ENCODE measurements at regions of chr3 and their contacts with region 1.

Region 1: DNA sequence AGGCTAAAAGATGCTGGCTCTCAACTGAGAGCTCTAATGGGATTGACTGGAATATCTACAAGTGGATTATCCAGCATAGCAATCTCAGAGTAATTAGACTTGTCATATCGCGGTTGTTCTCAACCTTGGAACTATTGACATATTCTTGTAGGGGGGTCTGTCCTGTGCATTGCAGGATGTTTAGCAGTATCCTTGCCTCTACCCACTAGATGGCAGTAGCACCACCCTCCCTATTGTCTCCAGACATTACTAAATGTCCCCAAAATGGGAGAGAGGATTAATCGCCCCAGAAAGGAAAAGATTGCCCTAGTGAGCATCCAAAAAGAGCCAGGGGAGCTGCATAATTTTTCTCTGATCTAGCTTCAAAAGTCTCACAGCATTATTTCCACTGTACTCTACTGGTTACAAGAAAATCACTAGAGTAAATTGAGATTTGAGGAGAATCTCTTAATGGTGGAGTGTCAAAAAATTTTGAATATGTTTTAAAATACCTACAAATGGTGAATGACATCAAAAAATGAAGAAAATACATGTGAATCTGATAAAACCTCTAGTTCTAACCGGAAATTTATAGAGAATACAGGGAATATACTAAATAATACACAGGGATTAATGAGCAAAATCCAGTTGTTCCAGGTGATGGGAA is 388.2 kb upstream of the AGTR1 start:
- DNase-seq: peak; percentile 58
- H3K4me3 Mint-ChIP-seq: no peak overlapping the region
- H3K27ac Mint-ChIP-seq: no peak overlapping the region
- H3K4me1 Mint-ChIP-seq: no peaks in the 10 kb centered on the region
- H3K27me3 Mint-ChIP-seq: peaks cover 2% of the 10 kb centered on the region

Region 2: DNA sequence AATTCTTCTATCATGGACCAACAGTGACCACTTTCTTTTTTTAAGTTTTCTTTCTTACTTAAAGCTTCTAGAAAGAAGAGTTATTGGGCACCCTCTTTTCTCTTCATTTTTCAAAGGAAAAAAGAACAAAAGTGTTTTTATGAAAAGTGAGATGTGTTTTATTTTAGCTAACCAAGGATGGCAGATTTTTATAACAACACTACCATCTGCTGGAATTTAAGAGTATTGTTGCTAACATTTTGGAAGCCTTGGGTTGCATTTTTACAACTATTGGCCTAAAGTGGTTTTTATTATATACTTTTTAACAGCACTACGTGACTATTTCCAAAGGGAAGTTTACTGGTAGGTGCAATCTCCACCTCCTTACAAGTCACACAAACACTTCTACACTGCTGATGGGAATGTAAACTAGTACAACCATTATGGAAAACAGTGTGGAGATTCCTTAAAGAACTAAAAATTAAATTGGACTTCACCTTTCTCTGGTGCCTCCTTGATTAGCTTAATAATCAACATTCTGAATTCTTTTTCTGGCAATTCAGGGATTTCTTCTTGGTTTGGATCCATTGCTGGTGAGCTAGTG is 150.5 kb after region 1 on chr3:
- intact Hi-C with region 1: loop called (anchors 10 kb)
- DNase-seq: no peak
- H3K4me3 Mint-ChIP-seq: no peak overlapping the region
- H3K27ac Mint-ChIP-seq: no peak overlapping the region
- H3K4me1 Mint-ChIP-seq: no peaks in the 10 kb centered on the region
- H3K27me3 Mint-ChIP-seq: no peaks in the 10 kb centered on the region

Region 3: GRCh38 chr3:148494451-148494850 is 184.9 kb after region 1 on chr3:
- intact Hi-C with region 1: no loop called
- DNase-seq: no peak
- H3K4me3 Mint-ChIP-seq: no peak overlapping the region
- H3K27ac Mint-ChIP-seq: no peak overlapping the region
- H3K4me1 Mint-ChIP-seq: no peaks in the 10 kb centered on the region
- H3K27me3 Mint-ChIP-seq: no peaks in the 10 kb centered on the region